Left lung (tissue), 14 donors: ENCODE measurements at regions of chr3 and their contacts with region 1.

Region 1: GRCh38 chr3:65785065-65785645 is 253.6 kb downstream of the MAGI1 start:
- DNase-seq: peak in 2 of 4 donors; percentile 40 to 66
- ATAC-seq: peak; percentile 68
- H3K4me3 ChIP-seq: no peak overlapping the region
- H3K27ac ChIP-seq: no peak overlapping the region
- H3K4me1 ChIP-seq: no peaks in the 10 kb centered on the region
- H3K27me3 ChIP-seq: no peaks in the 10 kb centered on the region
- CTCF ChIP-seq: peak; percentile 57 to 67

Region 2: GRCh38 chr3:65888980-65889706 is 104.0 kb after region 1 on chr3:
- intact Hi-C with region 1: no loop called
- DNase-seq: no peak
- ATAC-seq: peak; percentile 84
- H3K4me3 ChIP-seq: no peak overlapping the region
- H3K27ac ChIP-seq: no peak overlapping the region
- H3K4me1 ChIP-seq: no peaks in the 10 kb centered on the region
- H3K27me3 ChIP-seq: no peaks in the 10 kb centered on the region
- CTCF ChIP-seq: no peak

Region 3: GRCh38 chr3:66133050-66133757 is 348.0 kb after region 1 on chr3:
- intact Hi-C with region 1: loop called in 1 of 2 experiments (anchors 5 kb)
- DNase-seq: no peak
- ATAC-seq: no peak
- H3K4me3 ChIP-seq: no peak overlapping the region
- H3K27ac ChIP-seq: no peak overlapping the region
- H3K4me1 ChIP-seq: no peaks in the 10 kb centered on the region
- H3K27me3 ChIP-seq: no peaks in the 10 kb centered on the region
- CTCF ChIP-seq: no peak